Psoas muscle (tissue), 8 donors: ENCODE measurements at regions of chr19 and their contacts with region 1.

Region 1: GRCh38 chr19:45947926-45948325 is 25.7 kb downstream of the NOVA2 start:
- DNase-seq: no peak
- ATAC-seq: no peak
- H3K4me3 ChIP-seq: no peak overlapping the region
- H3K27ac ChIP-seq: no peak overlapping the region
- H3K4me1 ChIP-seq: no peaks in the 10 kb centered on the region
- H3K27me3 ChIP-seq: peaks cover 0 to 34% (median 0%) of the 10 kb centered on the region in 3 donors
- CTCF ChIP-seq: no peak

Region 2: GRCh38 chr19:45899919-45900589 is 47.9 kb before region 1 on chr19:
- intact Hi-C with region 1: loop called in 1 of 2 experiments (anchors 1 kb)
- DNase-seq: no peak
- ATAC-seq: no peak
- H3K4me3 ChIP-seq: no peak overlapping the region
- H3K27ac ChIP-seq: no peak overlapping the region
- H3K4me1 ChIP-seq: peaks cover 16% of the 10 kb centered on the region
- H3K27me3 ChIP-seq: no peaks in the 10 kb centered on the region
- CTCF ChIP-seq: no peak

Region 3: DNA sequence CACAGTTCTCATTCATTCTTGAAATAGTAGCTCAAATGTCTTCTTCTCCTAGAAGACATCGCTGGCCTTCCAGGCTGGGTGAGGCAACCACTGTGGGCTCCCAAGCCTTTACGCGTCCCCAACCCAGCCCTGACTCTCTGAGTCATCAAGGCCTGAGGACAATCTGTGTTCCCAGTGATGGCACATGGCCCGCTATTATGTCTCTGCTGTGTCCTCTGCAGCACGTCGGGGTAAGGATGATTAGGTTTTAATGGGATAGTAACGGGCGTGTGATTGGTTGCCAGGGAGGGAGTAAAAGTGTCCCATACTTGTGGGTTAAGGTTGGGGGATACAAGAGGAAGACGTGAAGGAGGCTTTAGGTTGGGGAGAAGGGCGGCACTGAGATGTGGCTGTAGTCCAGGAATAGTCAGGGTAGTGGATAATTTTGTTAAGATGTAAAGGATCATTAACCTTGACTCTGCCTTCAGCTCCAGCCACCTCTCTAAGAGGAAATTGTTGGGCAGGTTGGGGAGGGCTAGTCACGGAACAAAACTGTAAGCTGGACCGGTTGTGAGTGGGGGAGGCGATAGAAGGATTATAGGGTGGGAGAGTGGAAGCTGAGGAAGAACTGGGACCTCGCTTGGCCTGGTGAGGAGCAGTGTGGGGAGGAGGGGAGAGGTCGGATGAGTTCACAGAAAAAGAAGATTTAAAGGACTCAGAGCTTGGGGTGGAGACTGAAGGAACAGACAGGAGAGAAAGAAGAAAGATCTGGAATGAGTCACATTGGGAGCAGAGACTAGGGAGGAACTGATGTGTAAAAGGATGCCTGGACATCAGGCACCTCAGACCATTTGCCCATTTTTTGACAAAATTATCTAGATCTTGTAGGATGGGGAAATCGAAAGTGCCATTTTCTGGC is 253.7 kb after region 1 on chr19:
- intact Hi-C with region 1: no loop called
- DNase-seq: peak in 1 of 2 donors; percentile 28
- ATAC-seq: peak in 2 of 4 donors; percentile 39 to 45
- H3K4me3 ChIP-seq: no peak overlapping the region
- H3K27ac ChIP-seq: no peak overlapping the region
- H3K4me1 ChIP-seq: peaks cover 2% of the 10 kb centered on the region
- H3K27me3 ChIP-seq: no peaks in the 10 kb centered on the region
- CTCF ChIP-seq: no peak